Gastrocnemius medialis (tissue), 4 donors: ENCODE measurements at regions of chr1 and their contacts with region 1.

Region 1: DNA sequence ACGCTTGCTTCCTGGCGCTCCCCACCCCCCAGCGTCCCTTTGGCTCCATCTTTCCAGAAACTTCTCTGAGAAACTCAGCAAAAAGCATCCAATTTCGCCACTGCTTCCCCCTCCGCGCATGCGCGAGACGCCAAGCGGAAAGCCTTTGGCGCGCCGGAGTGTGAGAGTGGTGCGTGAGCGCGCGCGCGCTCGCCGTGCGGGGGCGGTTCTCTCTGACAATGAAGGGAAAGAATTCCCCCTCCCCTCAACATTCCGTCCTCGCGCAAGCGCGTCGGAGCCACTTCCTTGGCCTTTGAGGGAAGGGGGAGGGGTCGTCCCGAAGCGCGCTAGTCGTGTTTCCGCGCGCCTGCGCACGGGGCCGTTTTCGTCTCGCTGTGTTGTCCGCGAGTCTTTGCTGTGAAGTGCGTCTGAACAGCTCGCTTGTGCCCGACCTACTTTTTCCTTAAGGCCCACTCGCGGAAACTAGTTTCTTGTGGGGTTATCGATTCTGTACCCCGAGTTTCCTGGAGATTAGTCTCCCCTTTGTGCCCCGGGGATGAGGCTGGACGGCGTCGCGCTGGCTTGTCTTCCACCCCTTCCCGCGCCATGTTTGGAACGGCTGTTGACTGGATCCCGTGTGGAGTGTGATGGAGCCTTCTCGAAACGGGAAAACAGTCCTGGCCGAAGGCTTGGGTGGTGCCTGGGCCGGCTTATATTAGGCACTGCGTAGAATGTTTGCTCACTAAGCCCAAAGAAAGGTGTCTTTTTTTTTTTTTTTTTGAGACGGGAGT is 11.6 kb upstream of the SPEN start:
- DNase-seq: peak; percentile 99
- ATAC-seq: peak; percentile 73 to 79
- H3K4me3 ChIP-seq: peak overlapping the region; percentile 71 to 98 (median 82)
- H3K27ac ChIP-seq: peak overlapping the region; percentile 96 to 100 (median 98)
- H3K4me1 ChIP-seq: peaks cover 5 to 16% of the 10 kb centered on the region in 2 donors
- H3K27me3 ChIP-seq: no peaks in the 10 kb centered on the region
- CTCF ChIP-seq: no peak
- POLR2A ChIP-seq: peak; percentile 90 to 91

Region 2: DNA sequence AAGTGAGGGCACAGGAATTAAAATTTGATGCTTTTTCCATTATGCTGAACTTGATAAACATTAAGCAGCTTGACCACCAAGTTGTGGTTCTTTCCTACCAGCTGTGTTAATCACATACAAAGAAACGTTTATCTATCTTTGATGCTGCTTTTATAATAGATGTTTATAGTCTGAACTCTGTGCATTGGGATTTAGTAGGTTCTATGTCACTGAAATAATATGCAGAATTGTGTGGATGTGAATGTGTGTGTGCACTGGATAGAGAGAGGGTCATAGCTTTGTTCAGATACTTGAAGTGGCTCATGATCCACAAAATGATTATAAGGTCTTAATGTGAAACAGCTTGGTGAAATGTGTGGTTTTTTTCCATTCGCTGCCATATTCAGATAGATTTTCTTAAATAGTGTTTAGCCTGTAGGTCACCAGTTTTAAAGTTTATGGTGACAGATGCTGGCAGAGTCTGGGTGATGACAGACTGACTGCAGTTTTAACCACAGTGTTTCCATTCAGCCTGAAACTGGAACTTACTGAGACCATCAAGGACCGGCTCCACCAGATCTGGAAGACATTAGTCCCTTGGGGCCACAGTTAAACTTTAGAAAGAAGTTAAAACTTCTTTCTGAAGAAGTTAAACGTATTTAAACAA is 208.5 kb before region 1 on chr1:
- in situ Hi-C with region 1: no loop called
- intact Hi-C with region 1: loop called (anchors 10 kb)
- DNase-seq: no peak
- ATAC-seq: no peak
- H3K4me3 ChIP-seq: no peak overlapping the region
- H3K27ac ChIP-seq: peak overlapping the region; percentile 93 to 98 (median 95)
- H3K4me1 ChIP-seq: peaks cover 75 to 85% of the 10 kb centered on the region in 2 donors
- H3K27me3 ChIP-seq: no peaks in the 10 kb centered on the region
- CTCF ChIP-seq: no peak
- POLR2A ChIP-seq: no peak

Region 3: GRCh38 chr1:15799004-15799936 is 36.7 kb before region 1 on chr1:
- in situ Hi-C with region 1: no loop called
- intact Hi-C with region 1: no loop called
- DNase-seq: peak in 1 of 2 donors; percentile 75
- ATAC-seq: peak; percentile 71 to 82
- H3K4me3 ChIP-seq: no peak overlapping the region
- H3K27ac ChIP-seq: peak overlapping the region in 3 of 4 donors; percentile 34 to 60 (median 48)
- H3K4me1 ChIP-seq: peaks cover 10 to 17% of the 10 kb centered on the region in 2 donors
- H3K27me3 ChIP-seq: no peaks in the 10 kb centered on the region
- CTCF ChIP-seq: no peak
- POLR2A ChIP-seq: no peak

Region 4: DNA sequence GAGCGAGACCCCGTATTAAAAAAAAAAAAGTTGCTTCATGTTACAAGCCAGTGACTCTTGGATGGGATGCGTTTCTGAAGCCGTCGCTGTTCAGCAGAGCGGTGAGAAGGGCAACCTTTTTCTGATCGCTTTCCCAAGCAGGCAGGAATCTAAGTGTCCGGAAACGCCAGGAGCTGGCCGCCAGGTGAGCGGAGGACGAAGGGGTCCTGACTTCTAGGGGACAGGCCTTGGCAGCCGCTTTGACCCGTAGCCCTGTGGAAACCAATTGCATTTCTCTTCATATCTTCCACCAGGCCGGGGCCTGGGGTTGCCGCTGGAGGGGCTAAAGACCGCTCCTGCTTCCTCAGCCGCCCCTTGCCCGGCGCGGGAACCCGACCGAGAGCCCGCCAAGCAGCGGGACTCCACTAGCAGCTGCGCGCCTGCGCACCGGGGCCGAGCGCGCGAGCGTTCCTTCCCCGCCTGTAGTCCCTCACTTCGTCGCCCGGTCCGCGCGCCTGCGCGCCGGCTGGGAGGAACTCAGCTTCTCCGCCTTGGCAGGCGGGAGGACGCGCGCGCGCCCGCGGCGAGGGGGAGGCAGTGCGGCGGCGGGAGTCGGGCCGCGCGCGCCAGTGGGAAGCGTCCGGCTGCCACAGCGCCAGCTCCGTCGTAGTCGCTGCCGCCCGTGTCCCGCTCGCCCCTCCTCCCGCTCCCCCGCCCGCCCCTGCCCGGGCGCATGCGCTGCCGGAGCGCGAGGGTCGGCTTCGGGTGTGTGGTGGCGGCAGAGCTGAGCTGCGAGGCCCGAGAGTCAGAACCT is 11.4 kb after region 1 on chr1 and contains the start of gene SPEN:
- in situ Hi-C with region 1: no loop called
- intact Hi-C with region 1: loop called (anchors 1 kb)
- DNase-seq: peak; percentile 94 to 98
- ATAC-seq: peak; percentile 69 to 72
- H3K4me3 ChIP-seq: peak within 1 kb of the TSS; percentile 79 to 88 (median 87)
- H3K27ac ChIP-seq: peak within 1 kb of the TSS; percentile 90 to 99 (median 98)
- H3K4me1 ChIP-seq: peaks cover 43 to 52% of the 10 kb centered on the region in 2 donors
- H3K27me3 ChIP-seq: no peaks in the 10 kb centered on the region
- CTCF ChIP-seq: peak; percentile 7 to 26 (median 18)
- POLR2A ChIP-seq: peak; percentile 73 to 90
- total RNA-seq, gene SPEN: 21.7 to 55.5 (median 38.0) TPM

Region 5: GRCh38 chr1:15885701-15886610 is 50.0 kb after region 1 on chr1:
- in situ Hi-C with region 1: loop called in 1 of 4 experiments (anchors 10 kb)
- intact Hi-C with region 1: loop called (anchors 1 kb)
- DNase-seq: peak; percentile 93 to 96
- ATAC-seq: peak; percentile 92
- H3K4me3 ChIP-seq: peak overlapping the region; percentile 46 to 48 (median 48)
- H3K27ac ChIP-seq: peak overlapping the region; percentile 81 to 95 (median 90)
- H3K4me1 ChIP-seq: peaks cover 58 to 64% of the 10 kb centered on the region in 2 donors
- H3K27me3 ChIP-seq: no peaks in the 10 kb centered on the region
- CTCF ChIP-seq: no peak
- POLR2A ChIP-seq: peak; percentile 60 to 74

Region 6: DNA sequence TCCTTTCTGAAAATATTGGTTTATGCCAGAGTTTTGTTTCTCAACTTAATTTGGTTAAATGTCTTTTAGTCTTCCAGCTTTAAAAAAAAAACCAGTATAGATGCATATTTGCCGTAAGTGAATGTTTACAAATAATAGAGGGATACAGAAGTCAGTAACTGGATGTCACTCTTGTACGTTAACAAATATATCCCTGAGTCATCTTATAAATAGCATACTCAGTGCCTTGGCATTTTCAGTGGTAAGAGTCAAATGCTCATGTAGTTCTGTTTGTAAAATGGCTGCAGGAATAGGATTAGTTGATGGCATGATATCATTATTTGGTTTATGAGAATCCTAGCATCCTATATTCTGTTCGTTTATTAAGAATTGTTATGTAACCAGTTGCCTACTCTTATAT is 67.0 kb after region 1 on chr1:
- in situ Hi-C with region 1: no loop called
- intact Hi-C with region 1: loop called (anchors 5 kb)
- DNase-seq: no peak
- ATAC-seq: peak; percentile 93
- H3K4me3 ChIP-seq: peak overlapping the region in 2 of 4 donors; percentile 7 to 28
- H3K27ac ChIP-seq: peak overlapping the region; percentile 79 to 89 (median 85)
- H3K4me1 ChIP-seq: peaks cover 66 to 74% of the 10 kb centered on the region in 2 donors
- H3K27me3 ChIP-seq: no peaks in the 10 kb centered on the region
- CTCF ChIP-seq: no peak
- POLR2A ChIP-seq: no peak

Region 7: GRCh38 chr1:15975805-15976680 is 140.1 kb after region 1 on chr1 and contains the start of gene ZBTB17:
- in situ Hi-C with region 1: no loop called
- intact Hi-C with region 1: loop called (anchors 1 kb)
- DNase-seq: peak; percentile 85 to 90
- ATAC-seq: peak; percentile 98 to 100
- H3K4me3 ChIP-seq: peak within 1 kb of the TSS; percentile 84 to 96 (median 88)
- H3K27ac ChIP-seq: peak within 1 kb of the TSS; percentile 84 to 96 (median 88)
- H3K4me1 ChIP-seq: peaks cover 8 to 17% of the 10 kb centered on the region in 2 donors
- H3K27me3 ChIP-seq: no peaks in the 10 kb centered on the region
- CTCF ChIP-seq: no peak
- POLR2A ChIP-seq: peak; percentile 70 to 80
- total RNA-seq, gene ZBTB17: 25.9 to 44.1 (median 31.5) TPM

Region 8: GRCh38 chr1:16017461-16018303 is 181.8 kb after region 1 on chr1 and contains the start of gene HSPB7:
- in situ Hi-C with region 1: no loop called
- intact Hi-C with region 1: loop called (anchors 2 kb)
- DNase-seq: peak; percentile 91 to 97
- ATAC-seq: peak; percentile 20 to 26
- H3K4me3 ChIP-seq: peak within 1 kb of the TSS; percentile 68 to 82 (median 76)
- H3K27ac ChIP-seq: peak within 1 kb of the TSS; percentile 97 to 100 (median 98)
- H3K4me1 ChIP-seq: peaks cover 43 to 59% of the 10 kb centered on the region in 2 donors
- H3K27me3 ChIP-seq: no peaks in the 10 kb centered on the region
- CTCF ChIP-seq: peak in 2 of 5 experiments; percentile 20 to 29
- POLR2A ChIP-seq: peak in 1 of 2 donors; percentile 97
- total RNA-seq, gene HSPB7: 355 to 1,466 (median 716) TPM